ENCODE measurements at regions of chr15 and their contacts with region 1.

Region 1: GRCh38 chr15:95284933-95285421 is 1045.5 kb upstream of the NR2F2 start:
- DNase-seq: no peak

Region 2: GRCh38 chr15:94670438-94671034 is 614.4 kb before region 1 on chr15:
- intact Hi-C with region 1: loop called (anchors 10 kb)
- DNase-seq: peak in 2 of 42 donors; percentile 6 to 55